Activated CD4-positive, alpha-beta memory T cell treated with anti-CD3 and anti-CD28 coated beads for 36 hours (primary cell): ENCODE measurements at regions of chr10 and their contacts with region 1.

Region 1: GRCh38 chr10:1323951-1324350 is 267.8 kb downstream of the WDR37 start:
- DNase-seq: peak; percentile 58
- H3K4me3 Mint-ChIP-seq: no peak overlapping the region
- H3K27ac Mint-ChIP-seq: no peak overlapping the region
- H3K4me1 Mint-ChIP-seq: peaks cover 13% of the 10 kb centered on the region
- H3K27me3 Mint-ChIP-seq: peaks cover 23% of the 10 kb centered on the region

Region 2: DNA sequence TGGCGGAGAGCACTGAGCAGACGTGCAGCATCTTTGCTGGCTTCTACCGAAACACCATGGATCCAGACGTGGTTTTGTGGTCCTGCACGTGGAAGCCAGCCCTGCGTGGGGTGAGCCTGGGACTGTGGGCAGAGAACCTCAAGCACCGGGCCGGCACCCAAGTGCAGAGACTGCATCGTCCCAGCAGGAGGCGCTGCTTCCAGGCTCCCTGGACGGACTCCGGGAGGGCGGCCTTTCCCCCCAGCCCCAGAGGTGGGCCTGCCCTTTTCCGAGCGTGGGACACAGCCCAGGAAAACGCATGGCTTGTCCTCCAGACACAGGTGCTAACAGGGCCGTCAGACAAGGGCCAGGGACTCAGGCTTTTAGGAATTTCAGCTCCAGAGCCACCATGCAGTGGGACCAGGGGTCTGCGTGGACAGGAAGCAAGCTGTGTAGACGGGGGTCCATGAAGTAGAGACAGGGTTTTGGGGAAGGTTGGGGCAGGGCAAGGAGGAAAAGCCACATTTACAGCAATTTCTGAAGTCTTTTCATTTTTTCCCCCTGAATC is 36.1 kb after region 1 on chr10:
- CTCF ChIA-PET with region 1: no interaction called
- POLR2A ChIA-PET with region 1: no interaction called
- intact Hi-C with region 1: loop called (anchors 5 kb)
- DNase-seq: peak; percentile 19
- H3K4me3 Mint-ChIP-seq: no peak overlapping the region
- H3K27ac Mint-ChIP-seq: no peak overlapping the region
- H3K4me1 Mint-ChIP-seq: peaks cover 15% of the 10 kb centered on the region
- H3K27me3 Mint-ChIP-seq: peaks cover 11% of the 10 kb centered on the region

Region 3: DNA sequence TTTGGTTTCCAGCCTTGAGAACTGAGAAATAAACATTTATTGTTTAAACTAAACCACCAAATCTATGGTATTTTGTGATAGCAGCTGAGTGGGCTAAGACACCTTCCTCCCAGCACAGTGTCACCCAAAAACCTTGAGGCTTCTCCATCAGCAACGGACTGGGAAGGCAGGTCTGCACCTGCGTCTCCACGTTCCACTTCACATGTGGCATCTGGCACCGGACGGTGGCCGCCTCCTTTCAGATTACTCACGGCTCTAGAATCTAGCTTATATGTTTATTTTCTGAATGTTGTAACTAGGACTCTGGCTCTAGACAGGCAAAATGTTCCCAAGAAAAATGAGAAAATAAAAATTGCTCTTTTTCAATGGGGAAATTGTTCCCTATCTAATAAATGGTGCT is 212.4 kb after region 1 on chr10:
- CTCF ChIA-PET with region 1: no interaction called
- POLR2A ChIA-PET with region 1: no interaction called
- intact Hi-C with region 1: no loop called
- DNase-seq: no peak
- H3K4me3 Mint-ChIP-seq: no peak overlapping the region
- H3K27ac Mint-ChIP-seq: no peak overlapping the region
- H3K4me1 Mint-ChIP-seq: no peaks in the 10 kb centered on the region
- H3K27me3 Mint-ChIP-seq: no peaks in the 10 kb centered on the region